ENCODE measurements at regions of chr17 and their contacts with region 1.

Region 1: GRCh38 chr17:43125133-43125966 is at the start of gene BRCA1:
- DNase-seq: peak; percentile 89 to 94 (median 92)
- ATAC-seq: peak; percentile 100
- H3K4me3 ChIP-seq: peak within 1 kb of the TSS; percentile 15 to 95 (median 68)
- H3K27ac ChIP-seq: peak within 1 kb of the TSS; percentile 29 to 78 (median 72)
- H3K4me1 ChIP-seq: peaks cover 0 to 32% (median 10%) of the 10 kb centered on the region in 12 donors
- H3K27me3 ChIP-seq: no peaks in the 10 kb centered on the region
- CTCF ChIP-seq: peak in 1 of 12 donors; percentile 8
- POLR2A ChIP-seq: peak in 1 of 2 donors; percentile 42
- total RNA-seq, gene BRCA1: 4.8 to 11.7 (median 8.4) TPM

Region 2: DNA sequence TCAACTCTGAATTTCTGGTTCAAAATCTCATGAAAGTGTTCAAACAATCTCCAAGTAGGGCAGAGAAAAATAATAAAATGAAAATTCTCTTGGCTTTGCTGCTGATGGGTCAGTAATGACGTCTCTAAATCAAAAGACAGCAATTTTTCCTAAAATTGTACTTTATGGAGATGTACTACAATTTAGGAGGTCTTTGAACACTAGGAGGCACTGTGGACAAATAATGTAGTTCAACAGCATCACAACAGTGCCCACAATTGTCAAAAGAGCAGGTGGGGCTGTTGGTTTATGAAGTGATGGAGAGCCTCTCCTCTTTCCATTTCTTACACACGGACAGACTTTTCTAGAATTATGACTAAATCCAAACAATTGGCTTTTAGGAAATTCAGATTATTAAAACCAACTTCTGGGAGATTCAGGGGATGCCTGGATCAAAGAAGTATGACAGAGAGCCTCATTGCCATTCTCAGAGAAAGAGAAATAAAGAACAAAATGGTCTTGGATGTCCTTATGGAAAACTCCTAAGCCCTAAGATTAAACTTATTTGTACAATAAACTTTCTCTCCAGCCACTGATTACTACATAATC is 404.3 kb before region 1 on chr17:
- intact Hi-C with region 1: no loop called
- DNase-seq: peak in 1 of 5 donors; percentile 40
- ATAC-seq: peak; percentile 63 to 83 (median 80)
- H3K4me3 ChIP-seq: no peak overlapping the region
- H3K27ac ChIP-seq: no peak overlapping the region
- H3K4me1 ChIP-seq: peaks cover 0 to 3% (median 0%) of the 10 kb centered on the region in 12 donors
- H3K27me3 ChIP-seq: no peaks in the 10 kb centered on the region
- CTCF ChIP-seq: peak; percentile 55 to 81 (median 68)
- POLR2A ChIP-seq: no peak

Region 3: GRCh38 chr17:43033948-43034881 is 91.1 kb before region 1 on chr17:
- intact Hi-C with region 1: loop called in 3 of 10 experiments (anchors 5 to 10 kb)
- DNase-seq: no peak
- ATAC-seq: no peak
- H3K4me3 ChIP-seq: no peak overlapping the region
- H3K27ac ChIP-seq: no peak overlapping the region
- H3K4me1 ChIP-seq: no peaks in the 10 kb centered on the region
- H3K27me3 ChIP-seq: no peaks in the 10 kb centered on the region
- CTCF ChIP-seq: no peak
- POLR2A ChIP-seq: no peak

Measured in heart left ventricle (tissue), 16 donors.